ENCODE measurements at regions of chr4 and their contacts with region 1.

Region 1: DNA sequence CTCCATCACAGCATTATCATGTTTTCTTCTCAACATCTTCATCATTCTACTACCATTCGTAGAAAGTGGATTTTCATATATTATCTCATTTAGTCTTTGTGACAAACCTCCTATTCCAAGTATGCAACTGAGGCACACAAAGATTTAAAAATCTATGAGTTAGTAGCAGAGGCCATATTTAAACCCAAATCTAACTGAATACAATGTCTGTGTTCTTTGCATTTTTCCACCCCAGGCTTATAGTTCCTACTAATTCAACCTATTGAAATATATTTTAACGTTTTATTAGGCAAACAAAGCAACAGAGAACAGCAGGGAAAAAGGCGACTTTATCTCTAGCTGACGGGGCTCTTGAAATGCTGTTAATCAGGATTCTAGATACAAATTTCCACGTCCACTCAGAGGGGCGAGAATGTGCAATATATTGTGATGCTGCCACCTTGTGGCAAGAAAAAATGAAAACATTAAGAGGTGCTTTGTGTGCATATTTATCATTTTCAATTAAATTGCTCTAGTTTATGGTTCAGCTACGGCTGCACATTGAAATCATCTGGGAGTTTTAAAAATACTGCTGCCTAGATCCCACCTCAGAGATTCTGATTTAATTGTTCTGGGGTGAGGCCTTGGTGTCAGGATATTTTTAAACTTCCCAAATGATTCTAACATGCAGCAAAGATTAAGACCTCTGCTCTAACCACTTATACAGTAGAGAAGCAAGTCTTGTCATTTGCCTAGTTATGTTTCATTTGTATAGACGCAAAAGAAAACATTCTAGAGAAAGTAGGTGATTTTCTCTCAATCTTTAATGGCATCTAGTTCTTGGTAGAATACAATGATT is 315.9 kb downstream of the MAPK10 start:
- DNase-seq: no peak
- H3K4me3 ChIP-seq: no peak overlapping the region
- H3K27ac ChIP-seq: no peak overlapping the region
- H3K4me1 ChIP-seq: peaks cover 0 to 7% (median 4%) of the 10 kb centered on the region in 4 donors
- H3K27me3 ChIP-seq: no peaks in the 10 kb centered on the region
- CTCF ChIP-seq: peak; percentile 57 to 68 (median 65)
- EP300 ChIP-seq: no peak
- POLR2A ChIP-seq: no peak

Region 2: DNA sequence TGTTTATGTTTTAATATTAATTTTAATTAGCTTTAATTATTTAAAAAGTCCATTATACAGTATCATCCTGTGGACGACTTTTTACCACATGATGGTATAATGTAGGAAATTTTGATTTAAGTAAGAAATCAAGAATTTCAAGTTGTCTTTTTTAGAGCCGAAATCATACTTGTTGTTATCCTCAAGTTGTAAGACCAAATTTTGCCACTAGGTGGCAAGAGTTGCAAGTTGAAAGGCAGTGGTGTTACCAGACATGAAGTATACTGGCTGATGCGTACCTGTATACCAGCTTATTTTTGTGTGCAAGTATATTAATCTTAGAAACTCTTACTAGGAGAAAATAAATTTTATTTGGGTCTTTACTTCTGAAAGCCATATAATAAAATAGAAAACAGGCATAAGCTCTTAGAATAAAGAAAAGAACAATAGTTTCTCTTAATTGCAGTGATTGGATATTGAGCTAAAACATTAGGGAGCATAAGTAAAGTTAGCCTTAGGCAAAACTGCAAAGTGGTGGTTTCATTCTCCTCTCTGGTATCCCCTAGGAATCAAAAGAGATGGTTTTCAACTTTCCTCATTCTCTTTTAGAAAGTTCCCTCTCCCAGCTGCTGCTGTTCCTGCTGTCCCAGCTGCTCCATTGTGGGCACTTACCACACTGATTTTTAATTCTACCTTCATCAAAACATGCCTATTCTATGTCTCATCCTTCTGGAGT is 959.4 kb before region 1 on chr4:
- intact Hi-C with region 1: loop called (anchors 10 kb)
- DNase-seq: no peak
- H3K4me3 ChIP-seq: no peak overlapping the region
- H3K27ac ChIP-seq: no peak overlapping the region
- H3K4me1 ChIP-seq: no peaks in the 10 kb centered on the region
- H3K27me3 ChIP-seq: no peaks in the 10 kb centered on the region
- CTCF ChIP-seq: peak; percentile 58 to 75 (median 59)
- EP300 ChIP-seq: no peak
- POLR2A ChIP-seq: no peak

Region 3: DNA sequence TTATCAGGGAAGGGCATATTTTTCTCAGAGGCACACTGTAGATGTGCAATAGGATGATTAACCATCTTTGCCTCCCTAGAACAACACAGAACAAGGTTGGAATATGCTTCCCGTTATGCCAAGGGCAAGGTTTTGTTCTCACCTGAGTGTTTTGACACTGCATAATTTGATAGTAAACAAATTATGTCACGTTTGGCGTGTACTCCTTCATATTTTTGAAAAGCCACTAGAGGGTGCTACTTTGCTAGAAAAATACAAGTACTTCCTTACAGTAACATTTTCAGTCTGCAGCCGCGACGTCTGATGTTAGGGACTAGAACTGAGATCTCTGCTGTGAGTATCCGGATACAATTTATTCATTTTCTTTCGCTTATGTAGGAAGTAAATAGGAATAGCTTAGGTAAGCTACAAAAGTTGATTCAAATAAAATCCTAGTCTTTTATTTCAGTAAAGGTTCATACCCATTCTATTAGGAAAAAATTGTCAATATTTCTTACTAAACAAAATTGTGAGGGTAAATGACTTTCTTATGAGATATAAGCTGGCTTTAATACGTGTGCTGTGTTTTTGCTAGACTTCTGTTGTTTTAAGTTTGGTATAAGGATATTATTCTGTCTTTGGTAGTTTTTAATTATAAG is 896.4 kb before region 1 on chr4:
- intact Hi-C with region 1: loop called (anchors 5 kb)
- DNase-seq: no peak
- H3K4me3 ChIP-seq: peak overlapping the region in 1 of 4 donors; percentile 20
- H3K27ac ChIP-seq: no peak overlapping the region
- H3K4me1 ChIP-seq: peaks cover 0 to 8% (median 5%) of the 10 kb centered on the region in 4 donors
- H3K27me3 ChIP-seq: no peaks in the 10 kb centered on the region
- CTCF ChIP-seq: peak; percentile 53 to 64 (median 57)
- EP300 ChIP-seq: no peak
- POLR2A ChIP-seq: no peak

Region 4: DNA sequence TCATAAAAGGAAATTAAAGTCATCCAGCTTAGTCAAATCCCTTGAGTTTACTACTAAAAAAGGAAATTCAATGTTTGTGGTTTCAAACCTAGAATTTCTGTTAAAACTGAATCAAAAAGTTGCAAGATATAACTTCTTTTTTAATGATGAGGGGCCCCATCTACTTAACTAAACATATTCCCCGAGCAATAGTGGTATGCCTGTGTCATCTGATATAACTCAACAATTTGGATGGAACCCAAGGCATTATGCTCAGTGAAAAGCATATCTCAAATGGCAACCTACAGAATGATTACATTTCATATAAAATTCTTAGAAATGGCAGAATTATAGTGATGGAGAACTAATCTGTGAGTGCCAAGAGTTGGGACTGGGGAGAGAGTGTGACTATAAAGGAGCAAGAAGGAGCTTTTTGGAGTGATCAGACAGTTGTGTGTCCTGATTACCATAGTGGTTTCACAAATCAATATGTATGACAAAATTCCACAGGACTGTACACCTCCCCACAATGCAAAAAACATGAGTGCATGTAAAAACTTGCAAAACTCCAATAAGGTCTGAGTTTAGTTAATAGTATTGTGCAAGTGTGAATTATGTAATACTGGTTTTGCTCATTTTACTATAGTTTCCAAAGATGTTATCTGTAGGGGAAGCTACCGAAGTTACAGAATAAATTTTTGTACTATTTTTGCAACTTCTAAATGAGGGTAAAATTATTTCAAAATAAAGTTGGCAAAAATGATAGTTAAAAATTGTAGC is 245.8 kb before region 1 on chr4:
- intact Hi-C with region 1: loop called (anchors 2 kb)
- DNase-seq: no peak
- H3K4me3 ChIP-seq: no peak overlapping the region
- H3K27ac ChIP-seq: no peak overlapping the region
- H3K4me1 ChIP-seq: peaks cover 6 to 43% (median 21%) of the 10 kb centered on the region in 4 donors
- H3K27me3 ChIP-seq: no peaks in the 10 kb centered on the region
- CTCF ChIP-seq: no peak
- EP300 ChIP-seq: no peak
- POLR2A ChIP-seq: no peak

Region 5: GRCh38 chr4:85979276-85979675 is 64.7 kb before region 1 on chr4:
- intact Hi-C with region 1: loop called (anchors 10 kb)
- DNase-seq: no peak
- H3K4me3 ChIP-seq: no peak overlapping the region
- H3K27ac ChIP-seq: no peak overlapping the region
- H3K4me1 ChIP-seq: no peaks in the 10 kb centered on the region
- H3K27me3 ChIP-seq: no peaks in the 10 kb centered on the region
- CTCF ChIP-seq: no peak
- EP300 ChIP-seq: no peak
- POLR2A ChIP-seq: no peak